PC-9 (cell line): ENCODE measurements at regions of chr7 and their contacts with region 1.

Region 1: DNA sequence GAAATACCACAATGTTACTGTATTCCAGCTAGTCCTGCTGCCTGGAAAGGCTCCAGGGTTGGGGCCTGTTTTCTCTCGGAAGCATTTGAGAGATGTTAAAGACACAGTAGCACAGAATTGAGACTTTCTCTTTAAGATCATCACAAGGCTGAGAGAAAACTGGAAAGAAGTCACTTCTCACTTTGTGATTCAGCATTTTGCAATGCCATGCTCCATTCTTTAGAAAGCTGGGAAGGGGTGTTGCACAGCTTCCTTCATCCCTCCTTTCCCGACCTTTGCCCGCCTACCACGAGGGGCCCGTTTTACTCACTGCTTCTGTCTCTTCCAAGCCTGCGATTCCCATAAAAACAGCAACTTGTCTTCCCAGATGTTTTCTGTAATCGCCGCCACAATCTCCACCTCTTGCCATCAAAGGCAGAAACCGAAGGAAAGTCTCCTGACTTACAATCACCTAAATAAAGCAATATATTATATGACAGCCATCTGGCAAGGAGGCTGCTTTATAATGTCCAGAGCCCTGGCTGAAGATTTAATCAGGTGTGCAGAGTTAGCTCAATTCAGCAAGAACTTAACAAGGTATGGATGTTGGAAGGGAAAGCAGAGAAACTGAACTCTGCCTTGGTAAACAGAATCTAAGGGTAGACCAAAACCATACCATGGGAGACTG is 18.9 kb downstream of the NOD1 start:
- DNase-seq: peak; percentile 61 to 90
- H3K4me3 ChIP-seq: peak overlapping the region; percentile 37; the same call in 1 of the 2 replicates
- H3K27ac ChIP-seq: peak overlapping the region; percentile 81
- H3K4me1 ChIP-seq: peaks cover 36% of the 10 kb centered on the region
- H3K27me3 ChIP-seq: no peaks in the 10 kb centered on the region
- CTCF ChIP-seq: no peak

Region 2: GRCh38 chr7:30173058-30173897 is 286.4 kb before region 1 on chr7:
- CTCF ChIA-PET with region 1: no interaction called
- POLR2A ChIA-PET with region 1: interaction called, 10 read pairs
- intact Hi-C with region 1: no loop called
- DNase-seq: peak; percentile 84 to 88
- H3K4me3 ChIP-seq: no peak overlapping the region
- H3K27ac ChIP-seq: no peak overlapping the region
- H3K4me1 ChIP-seq: peaks cover 23% of the 10 kb centered on the region
- H3K27me3 ChIP-seq: no peaks in the 10 kb centered on the region
- CTCF ChIP-seq: peak; percentile 52; the same call in 1 of the 2 replicates

Region 3: GRCh38 chr7:30206491-30206890 is 253.2 kb before region 1 on chr7:
- CTCF ChIA-PET with region 1: no interaction called
- POLR2A ChIA-PET with region 1: no interaction called
- intact Hi-C with region 1: no loop called
- DNase-seq: peak; percentile 79 to 88
- H3K4me3 ChIP-seq: peak overlapping the region; percentile 27; the same call in 1 of the 2 replicates
- H3K27ac ChIP-seq: peak overlapping the region; percentile 65
- H3K4me1 ChIP-seq: peaks cover 15% of the 10 kb centered on the region
- H3K27me3 ChIP-seq: no peaks in the 10 kb centered on the region
- CTCF ChIP-seq: no peak